Caco-2 (cell line): ENCODE measurements at regions of chr1 and their contacts with region 1.

Region 1: GRCh38 chr1:115609021-115609420 is 32.7 kb upstream of the VANGL1 start:
- DNase-seq: no peak
- H3K4me3 ChIP-seq: no peak overlapping the region
- H3K4me3 Mint-ChIP-seq: no peak overlapping the region
- H3K27ac Mint-ChIP-seq: no peak overlapping the region
- H3K4me1 ChIP-seq: no peaks in the 10 kb centered on the region
- H3K4me1 Mint-ChIP-seq: peaks cover 6% of the 10 kb centered on the region
- H3K27me3 ChIP-seq: no peaks in the 10 kb centered on the region
- H3K27me3 Mint-ChIP-seq: no peaks in the 10 kb centered on the region
- CTCF ChIP-seq: no peak

Region 2: GRCh38 chr1:115642168-115643072 is 33.4 kb after region 1 on chr1:
- CTCF ChIA-PET with region 1: interaction called, 12 read pairs
- POLR2A ChIA-PET with region 1: no interaction called
- intact Hi-C with region 1: loop called (anchors 1 kb)
- DNase-seq: peak; percentile 64 to 66
- H3K4me3 ChIP-seq: peak overlapping the region; percentile 78
- H3K4me3 Mint-ChIP-seq: peak overlapping the region; percentile 92
- H3K27ac Mint-ChIP-seq: peak overlapping the region; percentile 76
- H3K4me1 ChIP-seq: peaks cover 20% of the 10 kb centered on the region
- H3K4me1 Mint-ChIP-seq: peaks cover 4% of the 10 kb centered on the region
- H3K27me3 ChIP-seq: no peaks in the 10 kb centered on the region
- H3K27me3 Mint-ChIP-seq: no peaks in the 10 kb centered on the region
- CTCF ChIP-seq: peak in 1 of 2 experiments; percentile 30

Region 3: DNA sequence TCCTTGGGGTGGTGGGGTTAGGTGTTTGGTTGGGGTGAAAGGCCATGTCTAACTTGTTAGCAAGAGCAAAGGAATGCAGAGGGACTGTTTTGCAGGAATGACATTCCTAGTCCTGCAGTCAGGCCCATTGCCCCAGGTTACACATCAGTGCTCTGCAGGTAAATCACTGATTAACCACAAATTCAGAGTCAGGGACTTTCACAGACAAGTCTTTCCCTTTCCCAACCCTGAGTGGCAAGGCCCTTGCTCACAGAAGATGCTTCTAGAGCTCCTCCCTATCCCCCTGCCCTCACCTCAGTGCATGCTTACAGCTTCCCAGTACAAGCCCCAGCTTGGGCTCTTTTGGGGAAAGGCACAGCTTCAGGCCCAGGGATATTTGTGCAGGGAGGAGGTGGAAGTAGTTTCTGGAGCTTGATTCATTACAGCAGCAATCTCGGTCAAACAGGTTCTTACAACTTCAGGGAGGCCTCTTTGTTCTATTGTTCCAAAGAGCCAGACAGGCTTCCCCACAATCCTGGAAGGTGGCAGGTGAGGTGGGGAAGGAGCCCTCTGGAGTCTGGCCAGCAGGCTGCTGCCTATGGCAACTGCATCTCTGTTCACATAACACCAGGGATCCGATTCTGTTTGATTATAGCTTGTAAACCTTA is 105.6 kb after region 1 on chr1:
- CTCF ChIA-PET with region 1: interaction called, 3 read pairs
- POLR2A ChIA-PET with region 1: no interaction called
- intact Hi-C with region 1: loop called (anchors 2 kb)
- DNase-seq: peak; percentile 90 to 91
- H3K4me3 ChIP-seq: no peak overlapping the region
- H3K4me3 Mint-ChIP-seq: peak overlapping the region; percentile 53
- H3K27ac Mint-ChIP-seq: peak overlapping the region; percentile 91
- H3K4me1 ChIP-seq: peaks cover 58% of the 10 kb centered on the region
- H3K4me1 Mint-ChIP-seq: peaks cover 35% of the 10 kb centered on the region
- H3K27me3 ChIP-seq: no peaks in the 10 kb centered on the region
- H3K27me3 Mint-ChIP-seq: no peaks in the 10 kb centered on the region
- CTCF ChIP-seq: no peak

Region 4: DNA sequence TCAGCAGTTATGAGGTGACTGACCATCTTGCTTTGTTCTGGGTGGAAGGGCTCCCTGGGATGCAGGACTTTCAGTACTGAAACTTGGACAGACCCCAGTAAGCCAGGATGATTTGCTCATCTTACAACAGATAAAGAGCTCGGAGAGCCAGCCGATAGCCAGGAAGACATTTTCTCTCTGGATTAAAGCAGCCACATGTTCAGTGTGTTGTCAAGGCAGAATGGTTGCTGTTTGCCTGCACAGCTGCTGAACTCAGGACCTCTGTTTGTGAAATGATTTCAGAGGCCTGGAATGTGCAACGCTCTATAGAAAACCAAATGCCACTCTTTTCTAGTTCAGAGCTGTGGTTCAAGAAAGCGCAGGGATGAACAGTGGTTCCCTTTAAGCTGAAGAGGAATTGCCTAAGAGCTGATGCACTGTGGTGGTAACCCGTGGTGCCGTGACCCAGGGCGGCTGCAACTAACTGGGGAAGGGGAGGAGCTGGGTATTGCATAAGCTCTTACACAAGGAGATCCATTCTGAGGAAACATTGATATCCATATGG is 118.8 kb after region 1 on chr1:
- CTCF ChIA-PET with region 1: no interaction called
- POLR2A ChIA-PET with region 1: no interaction called
- intact Hi-C with region 1: no loop called
- DNase-seq: no peak
- H3K4me3 ChIP-seq: no peak overlapping the region
- H3K4me3 Mint-ChIP-seq: no peak overlapping the region
- H3K27ac Mint-ChIP-seq: peak overlapping the region; percentile 65
- H3K4me1 ChIP-seq: peaks cover 7% of the 10 kb centered on the region; the same call in 1 of the 2 replicates
- H3K4me1 Mint-ChIP-seq: peaks cover 9% of the 10 kb centered on the region
- H3K27me3 ChIP-seq: no peaks in the 10 kb centered on the region
- H3K27me3 Mint-ChIP-seq: no peaks in the 10 kb centered on the region
- CTCF ChIP-seq: no peak

Region 5: GRCh38 chr1:115764541-115764940 is 155.5 kb after region 1 on chr1:
- CTCF ChIA-PET with region 1: interaction called, 31 read pairs
- POLR2A ChIA-PET with region 1: no interaction called
- intact Hi-C with region 1: loop called (anchors 1 kb)
- DNase-seq: peak; percentile 47 to 57
- H3K4me3 ChIP-seq: no peak overlapping the region
- H3K4me3 Mint-ChIP-seq: no peak overlapping the region
- H3K27ac Mint-ChIP-seq: no peak overlapping the region
- H3K4me1 ChIP-seq: no peaks in the 10 kb centered on the region
- H3K4me1 Mint-ChIP-seq: peaks cover 11% of the 10 kb centered on the region
- H3K27me3 ChIP-seq: no peaks in the 10 kb centered on the region
- H3K27me3 Mint-ChIP-seq: no peaks in the 10 kb centered on the region
- CTCF ChIP-seq: peak; percentile 46 to 50

Region 6: DNA sequence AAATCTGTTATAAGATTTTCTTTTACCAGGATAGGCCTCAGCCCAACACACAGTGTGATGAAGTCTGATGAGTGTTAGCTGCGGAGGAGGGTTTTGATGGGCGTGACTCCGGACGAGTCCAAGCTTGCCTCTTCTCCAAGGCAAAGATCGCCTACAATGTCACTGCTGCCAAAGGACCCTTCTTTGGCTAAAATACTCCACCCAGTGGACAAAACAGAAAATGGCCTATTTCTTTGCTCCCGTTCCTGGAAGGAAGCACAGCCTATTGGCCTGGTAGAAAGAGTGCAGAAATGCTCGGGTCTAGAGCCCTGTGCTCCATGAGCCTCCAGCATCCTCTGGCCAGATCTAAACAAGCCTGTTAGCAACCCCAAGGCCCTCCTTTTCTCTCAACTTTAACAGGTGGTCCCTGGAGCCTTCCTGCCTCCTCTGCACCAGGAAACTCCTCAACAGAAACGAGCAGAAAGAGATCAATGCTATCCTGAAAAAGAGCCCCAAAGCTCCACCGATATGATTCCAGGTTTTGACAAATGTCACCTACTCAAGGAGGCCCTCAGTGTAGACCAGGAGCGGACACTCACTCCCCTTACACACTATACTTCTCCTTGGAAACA is 162.9 kb after region 1 on chr1:
- CTCF ChIA-PET with region 1: interaction called, 16 read pairs
- POLR2A ChIA-PET with region 1: no interaction called
- intact Hi-C with region 1: no loop called
- DNase-seq: peak; percentile 75 to 77
- H3K4me3 ChIP-seq: no peak overlapping the region
- H3K4me3 Mint-ChIP-seq: no peak overlapping the region
- H3K27ac Mint-ChIP-seq: no peak overlapping the region
- H3K4me1 ChIP-seq: peaks cover 6% of the 10 kb centered on the region; the same call in 1 of the 2 replicates
- H3K4me1 Mint-ChIP-seq: peaks cover 11% of the 10 kb centered on the region
- H3K27me3 ChIP-seq: no peaks in the 10 kb centered on the region
- H3K27me3 Mint-ChIP-seq: no peaks in the 10 kb centered on the region
- CTCF ChIP-seq: peak; percentile 30 to 41